Activated CD4-positive, alpha-beta T cell treated with anti-CD3 and anti-CD28 coated beads for 36 hours (primary cell): ENCODE measurements at regions of chr9 and their contacts with region 1.

Region 1: GRCh38 chr9:5437254-5438216 is at the start of gene PLGRKT:
- DNase-seq: peak; percentile 95
- ATAC-seq: peak; percentile 90
- H3K4me3 Mint-ChIP-seq: peak within 1 kb of the TSS; percentile 85
- H3K27ac Mint-ChIP-seq: peak within 1 kb of the TSS; percentile 99
- H3K4me1 Mint-ChIP-seq: peaks cover 55% of the 10 kb centered on the region
- H3K27me3 Mint-ChIP-seq: no peaks in the 10 kb centered on the region
- total RNA-seq, gene PLGRKT: 44.0 to 47.9 TPM

Region 2: DNA sequence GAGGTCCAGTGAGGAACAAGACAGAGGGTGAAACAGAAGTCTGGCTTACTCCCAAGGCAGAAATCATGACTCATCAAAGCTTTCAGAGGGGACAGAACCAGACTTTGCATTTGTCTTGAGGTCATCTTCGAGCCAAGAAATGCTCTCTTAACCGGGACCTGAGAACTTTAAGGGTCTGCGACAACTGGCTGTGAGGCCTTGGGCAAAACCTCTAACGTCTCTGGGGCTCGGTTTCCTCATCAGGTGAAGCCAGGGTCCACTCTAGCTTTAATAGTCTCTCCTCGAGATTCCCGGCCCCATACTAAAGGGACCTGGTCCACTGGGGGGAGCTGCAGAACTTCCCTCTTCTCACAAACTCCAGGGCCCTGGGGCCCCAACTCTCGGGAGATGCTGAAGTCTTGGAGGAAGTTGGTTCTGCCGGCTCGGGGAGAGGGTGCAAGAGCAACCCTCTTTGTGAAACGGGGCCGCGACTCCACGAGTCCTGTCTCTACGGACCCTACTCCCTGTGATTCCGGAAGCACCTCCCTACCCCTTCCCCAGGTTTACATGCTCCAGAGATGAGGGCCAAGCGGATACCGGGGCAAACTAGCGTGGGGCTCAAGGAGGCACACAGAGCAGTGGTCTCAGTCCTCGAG is 1140.3 kb before region 1 on chr9:
- CTCF ChIA-PET with region 1: no interaction called
- POLR2A ChIA-PET with region 1: no interaction called
- intact Hi-C with region 1: loop called in 1 of 2 experiments (anchors 5 kb)
- DNase-seq: peak; percentile 65
- ATAC-seq: peak; percentile 37
- H3K4me3 Mint-ChIP-seq: peak overlapping the region; percentile 86
- H3K27ac Mint-ChIP-seq: peak overlapping the region; percentile 86
- H3K4me1 Mint-ChIP-seq: peaks cover 45% of the 10 kb centered on the region
- H3K27me3 Mint-ChIP-seq: peaks cover 32% of the 10 kb centered on the region

Region 3: DNA sequence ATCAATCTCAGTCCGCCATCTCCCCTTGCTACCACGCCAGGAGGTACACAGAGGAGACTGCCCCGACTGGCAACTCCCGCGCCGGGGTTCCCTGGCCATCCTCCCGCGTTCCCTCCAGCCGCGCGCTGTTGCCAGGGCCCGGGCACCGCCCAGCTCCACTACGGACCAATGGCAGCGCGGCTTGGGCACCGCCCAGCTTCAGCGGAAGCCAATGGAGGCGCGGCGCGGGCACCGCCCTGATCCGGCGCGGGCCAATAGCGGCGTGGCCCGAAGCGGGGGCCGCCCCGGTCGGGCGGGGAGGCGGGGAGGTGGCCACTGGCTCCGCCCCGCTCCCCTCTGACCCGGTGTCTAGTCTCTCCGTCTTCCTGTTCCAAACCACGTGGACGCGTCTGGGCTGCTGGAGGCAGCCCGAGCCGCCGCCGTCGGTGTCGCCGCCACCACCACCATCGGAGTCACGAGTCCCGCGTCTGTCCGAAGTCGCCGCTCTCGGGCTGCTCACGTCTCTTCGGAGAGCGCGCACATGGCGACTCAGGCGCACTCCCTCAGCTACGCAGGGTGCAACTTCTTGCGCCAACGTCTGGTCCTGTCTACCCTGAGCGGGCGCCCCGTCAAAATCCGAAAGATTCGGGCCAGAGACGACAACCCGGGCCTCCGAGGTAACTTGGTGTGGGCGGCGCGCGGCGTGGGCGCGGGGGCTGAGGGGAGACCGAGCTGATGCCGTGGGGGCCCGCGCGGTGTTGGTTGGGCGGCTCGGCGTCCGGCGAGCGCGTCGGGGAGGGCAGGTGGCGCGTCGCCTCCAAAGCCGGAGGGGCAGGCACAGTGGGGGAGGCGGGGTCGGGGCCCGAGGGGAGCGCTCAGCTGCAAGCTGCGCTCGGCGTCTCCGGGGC is 644.7 kb before region 1 on chr9 and contains the start of gene RCL1:
- CTCF ChIA-PET with region 1: no interaction called
- POLR2A ChIA-PET with region 1: no interaction called
- intact Hi-C with region 1: loop called in 1 of 2 experiments (anchors 2 kb)
- DNase-seq: peak; percentile 98
- ATAC-seq: peak; percentile 96
- H3K4me3 Mint-ChIP-seq: peak within 1 kb of the TSS; percentile 97
- H3K27ac Mint-ChIP-seq: peak within 1 kb of the TSS; percentile 89
- H3K4me1 Mint-ChIP-seq: peaks cover 44% of the 10 kb centered on the region
- H3K27me3 Mint-ChIP-seq: no peaks in the 10 kb centered on the region
- total RNA-seq, gene RCL1: 27.0 to 36.4 TPM

Region 4: DNA sequence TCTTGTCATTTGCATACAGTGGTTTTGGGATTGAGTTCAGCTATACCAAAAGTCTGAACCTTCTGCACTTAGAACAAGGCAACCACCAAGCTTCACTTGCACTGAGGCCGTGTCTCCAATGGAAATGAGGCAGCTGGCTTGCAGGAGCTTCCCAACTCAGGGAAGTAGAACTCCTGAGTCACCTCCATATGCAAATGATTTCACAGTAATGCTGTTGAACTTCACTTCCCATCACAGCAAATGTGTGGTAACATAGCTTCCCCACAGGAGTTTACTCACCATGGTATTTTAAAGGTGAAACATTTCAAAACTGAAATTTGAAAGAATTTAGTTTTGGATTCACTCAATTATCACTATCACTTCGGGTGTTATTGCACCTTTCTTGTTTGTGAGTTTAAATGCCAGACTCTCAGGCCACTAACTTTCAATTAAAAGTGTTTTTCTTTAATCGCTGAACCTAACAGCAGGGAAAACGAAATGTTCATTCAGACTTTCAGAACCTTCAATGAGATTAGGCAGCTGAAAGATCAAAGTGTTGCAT is 21.8 kb after region 1 on chr9:
- CTCF ChIA-PET with region 1: interaction called, 4 read pairs
- POLR2A ChIA-PET with region 1: interaction called, 5 read pairs
- intact Hi-C with region 1: loop called (anchors 1 kb)
- DNase-seq: peak; percentile 47
- ATAC-seq: peak; percentile 67
- H3K4me3 Mint-ChIP-seq: peak overlapping the region; percentile 68
- H3K27ac Mint-ChIP-seq: peak overlapping the region; percentile 89
- H3K4me1 Mint-ChIP-seq: peaks cover 80% of the 10 kb centered on the region
- H3K27me3 Mint-ChIP-seq: no peaks in the 10 kb centered on the region

Region 5: DNA sequence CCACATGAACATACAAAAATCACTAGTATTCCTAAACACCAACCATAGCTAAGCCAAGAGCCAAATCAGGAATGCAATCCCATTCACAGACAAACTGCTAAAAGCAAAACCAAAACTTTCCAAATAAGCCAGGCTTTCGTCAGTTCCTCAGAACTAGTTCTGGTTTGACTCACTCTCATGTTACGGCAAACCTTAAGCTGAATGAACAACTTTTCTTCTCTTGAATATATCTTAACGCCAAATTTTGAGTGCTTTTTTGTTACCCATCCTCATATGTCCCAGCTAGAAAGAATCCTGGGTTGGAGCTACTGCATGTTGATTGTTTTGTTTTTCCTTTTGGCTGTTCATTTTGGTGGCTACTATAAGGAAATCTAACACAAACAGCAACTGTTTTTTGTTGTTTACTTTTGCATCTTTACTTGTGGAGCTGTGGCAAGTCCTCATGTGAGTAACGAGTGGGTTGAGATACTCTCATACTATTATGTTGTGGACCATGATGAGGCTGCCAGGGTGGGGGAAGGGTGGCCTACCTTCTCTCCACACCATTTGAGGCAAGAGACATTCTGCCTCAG is 72.9 kb after region 1 on chr9 and contains the start of gene PDCD1LG2:
- CTCF ChIA-PET with region 1: no interaction called
- POLR2A ChIA-PET with region 1: no interaction called
- intact Hi-C with region 1: no loop called
- DNase-seq: peak; percentile 78
- ATAC-seq: peak; percentile 92
- H3K4me3 Mint-ChIP-seq: peak within 1 kb of the TSS; percentile 64
- H3K27ac Mint-ChIP-seq: peak within 1 kb of the TSS; percentile 89
- H3K4me1 Mint-ChIP-seq: peaks cover 50% of the 10 kb centered on the region
- H3K27me3 Mint-ChIP-seq: no peaks in the 10 kb centered on the region
- total RNA-seq, gene PDCD1LG2: 0.43 to 0.81 TPM

Region 6: GRCh38 chr9:5832543-5833529 is 395.3 kb after region 1 on chr9 and contains the start of gene ERMP1:
- CTCF ChIA-PET with region 1: interaction called, 3 read pairs
- POLR2A ChIA-PET with region 1: no interaction called
- intact Hi-C with region 1: loop called in 1 of 2 experiments (anchors 5 kb)
- DNase-seq: peak; percentile 94
- ATAC-seq: peak; percentile 88
- H3K4me3 Mint-ChIP-seq: peak within 1 kb of the TSS; percentile 91
- H3K27ac Mint-ChIP-seq: peak within 1 kb of the TSS; percentile 84
- H3K4me1 Mint-ChIP-seq: peaks cover 48% of the 10 kb centered on the region
- H3K27me3 Mint-ChIP-seq: no peaks in the 10 kb centered on the region
- total RNA-seq, gene ERMP1: 13.3 to 13.9 TPM